AG04450 (cell line): ENCODE measurements at regions of chr11 and their contacts with region 1.

Region 1: GRCh38 chr11:122853971-122854446 is 15.7 kb downstream of the CRTAM start:
- DNase-seq: peak; percentile 59
- H3K4me3 ChIP-seq: no peak overlapping the region
- H3K27ac ChIP-seq: no peak overlapping the region
- H3K27me3 ChIP-seq: no peaks in the 10 kb centered on the region
- CTCF ChIP-seq: peak; percentile 69

Region 2: DNA sequence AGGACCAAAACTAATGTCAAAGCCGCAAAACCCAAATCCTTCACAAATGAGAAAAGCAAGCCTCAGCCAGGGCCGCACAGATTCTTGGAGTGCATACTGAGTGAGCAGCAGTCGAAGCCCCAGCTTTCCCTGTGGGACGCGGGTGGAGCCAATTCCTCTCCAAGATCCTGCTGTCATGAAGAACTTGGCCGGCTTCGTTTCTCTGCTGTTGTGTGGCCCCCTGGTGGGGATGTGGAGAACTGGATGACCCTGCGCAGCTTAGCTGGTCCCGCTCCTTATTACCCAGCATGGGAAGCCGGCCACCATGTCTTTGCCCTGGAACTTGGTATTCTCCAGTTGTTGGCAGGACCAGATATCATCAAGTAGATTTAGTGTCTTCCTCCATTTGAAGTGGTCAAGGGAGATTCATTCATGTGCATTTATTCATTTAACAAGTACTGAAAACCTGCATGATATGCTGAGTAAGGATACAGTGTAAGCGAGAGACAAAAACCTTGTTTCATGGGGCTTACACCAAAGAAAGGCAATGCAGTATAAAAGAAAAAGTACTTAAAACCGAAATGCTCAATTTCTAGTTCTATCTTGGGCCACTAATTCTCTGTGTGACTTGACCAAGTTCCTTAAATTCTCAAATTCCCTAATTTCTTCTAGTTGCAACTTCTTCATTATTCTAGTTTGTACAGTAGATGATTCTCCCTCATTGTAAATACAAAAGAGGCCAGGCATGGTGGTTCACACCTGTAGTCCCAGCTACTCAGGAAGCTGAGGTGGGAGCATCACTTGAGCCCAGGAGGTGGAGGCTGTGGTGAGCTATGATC is 72.4 kb before region 1 on chr11:
- CTCF ChIA-PET with region 1: interaction called, 26 read pairs
- POLR2A ChIA-PET with region 1: no interaction called
- DNase-seq: peak; percentile 80
- H3K4me3 ChIP-seq: no peak overlapping the region
- H3K27ac ChIP-seq: no peak overlapping the region
- H3K27me3 ChIP-seq: no peaks in the 10 kb centered on the region
- CTCF ChIP-seq: peak; percentile 94

Region 3: DNA sequence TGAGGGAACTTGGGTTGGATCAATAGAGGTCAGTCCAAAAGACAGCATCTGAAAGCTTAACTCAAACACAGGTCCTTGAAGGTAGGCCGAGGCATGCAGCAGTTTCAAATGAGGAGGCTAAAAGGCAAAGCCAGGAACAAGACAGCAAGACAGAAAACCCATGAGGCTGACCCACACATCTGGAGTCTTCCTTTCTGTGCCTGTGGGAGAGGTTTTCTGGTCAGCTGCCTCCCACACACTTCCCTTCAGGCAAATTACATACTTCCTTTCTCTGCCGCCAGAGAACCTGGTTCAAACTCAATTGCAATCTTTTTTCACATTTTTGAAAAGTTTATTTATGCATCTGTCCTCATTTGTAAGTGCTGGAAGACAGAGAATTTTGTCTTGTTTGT is 45.5 kb before region 1 on chr11:
- CTCF ChIA-PET with region 1: interaction called, 23 read pairs
- POLR2A ChIA-PET with region 1: no interaction called
- DNase-seq: no peak
- H3K4me3 ChIP-seq: no peak overlapping the region
- H3K27ac ChIP-seq: peak overlapping the region; percentile 76
- H3K27me3 ChIP-seq: no peaks in the 10 kb centered on the region
- CTCF ChIP-seq: no peak

Region 4: DNA sequence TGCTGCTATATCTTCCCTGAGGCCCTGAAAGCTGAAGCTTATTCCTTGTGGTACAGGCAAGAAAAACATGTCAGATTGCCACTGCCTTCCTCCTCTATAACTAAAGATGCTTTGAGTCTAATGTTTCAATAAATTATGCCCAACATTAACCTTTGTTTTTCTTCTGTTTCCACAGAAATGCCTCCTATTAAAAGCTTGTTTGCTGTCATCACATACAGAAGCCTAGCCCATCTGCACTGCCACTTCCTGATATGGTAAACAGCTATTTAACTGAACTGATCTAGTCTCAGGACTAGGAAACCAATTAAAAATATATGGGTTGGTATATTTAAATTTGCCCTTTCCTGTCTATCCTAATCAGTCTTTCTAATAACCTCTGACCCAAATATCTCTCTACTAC is 32.8 kb before region 1 on chr11:
- CTCF ChIA-PET with region 1: interaction called, 10 read pairs
- POLR2A ChIA-PET with region 1: no interaction called
- DNase-seq: no peak
- H3K4me3 ChIP-seq: no peak overlapping the region
- H3K27ac ChIP-seq: no peak overlapping the region
- H3K27me3 ChIP-seq: no peaks in the 10 kb centered on the region
- CTCF ChIP-seq: no peak

Region 5: GRCh38 chr11:122843281-122844141 is 10.5 kb before region 1 on chr11:
- CTCF ChIA-PET with region 1: interaction called, 19 read pairs
- POLR2A ChIA-PET with region 1: no interaction called
- DNase-seq: no peak
- H3K4me3 ChIP-seq: no peak overlapping the region
- H3K27ac ChIP-seq: no peak overlapping the region
- H3K27me3 ChIP-seq: no peaks in the 10 kb centered on the region
- CTCF ChIP-seq: no peak

Region 6: GRCh38 chr11:123020968-123021367 is 167.0 kb after region 1 on chr11:
- CTCF ChIA-PET with region 1: interaction called, 69 read pairs
- POLR2A ChIA-PET with region 1: no interaction called
- DNase-seq: peak; percentile 29
- H3K4me3 ChIP-seq: no peak overlapping the region
- H3K27ac ChIP-seq: no peak overlapping the region
- H3K27me3 ChIP-seq: peaks cover 25% of the 10 kb centered on the region
- CTCF ChIP-seq: peak; percentile 74